ENCODE measurements at regions of chr18 and their contacts with region 1.

Region 1: DNA sequence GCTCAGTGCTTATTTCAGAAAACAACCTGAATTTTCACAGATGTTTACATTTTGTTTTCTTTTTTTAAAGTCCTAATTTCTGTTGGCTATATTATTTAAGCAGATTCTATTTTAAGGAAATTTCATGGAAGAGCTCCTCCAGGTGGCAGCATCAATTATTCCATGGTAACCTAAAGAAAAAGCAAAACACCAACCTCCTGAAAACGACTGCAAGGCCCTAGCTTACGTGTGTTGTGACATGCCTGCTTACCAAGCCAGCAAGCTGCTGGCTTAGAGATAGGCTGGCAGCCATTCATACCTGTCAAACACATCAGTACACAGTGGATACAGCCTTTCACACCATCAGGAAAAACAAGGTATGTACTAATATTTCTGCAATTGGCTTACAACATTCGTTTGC is 64.9 kb downstream of the LPIN2 start:
- DNase-seq: no peak
- H3K4me3 ChIP-seq: no peak overlapping the region
- H3K27ac ChIP-seq: no peak overlapping the region
- H3K4me1 ChIP-seq: no peaks in the 10 kb centered on the region
- H3K27me3 ChIP-seq: no peaks in the 10 kb centered on the region
- CTCF ChIP-seq: peak in 2 of 3 experiments; percentile 27 to 33; a peak in 2 of 4 replicates
- EP300 ChIP-seq: no peak
- POLR2A ChIP-seq: no peak
- RAD21 ChIP-seq: peak; percentile 29 to 33; a peak in 3 of 4 replicates

Region 2: DNA sequence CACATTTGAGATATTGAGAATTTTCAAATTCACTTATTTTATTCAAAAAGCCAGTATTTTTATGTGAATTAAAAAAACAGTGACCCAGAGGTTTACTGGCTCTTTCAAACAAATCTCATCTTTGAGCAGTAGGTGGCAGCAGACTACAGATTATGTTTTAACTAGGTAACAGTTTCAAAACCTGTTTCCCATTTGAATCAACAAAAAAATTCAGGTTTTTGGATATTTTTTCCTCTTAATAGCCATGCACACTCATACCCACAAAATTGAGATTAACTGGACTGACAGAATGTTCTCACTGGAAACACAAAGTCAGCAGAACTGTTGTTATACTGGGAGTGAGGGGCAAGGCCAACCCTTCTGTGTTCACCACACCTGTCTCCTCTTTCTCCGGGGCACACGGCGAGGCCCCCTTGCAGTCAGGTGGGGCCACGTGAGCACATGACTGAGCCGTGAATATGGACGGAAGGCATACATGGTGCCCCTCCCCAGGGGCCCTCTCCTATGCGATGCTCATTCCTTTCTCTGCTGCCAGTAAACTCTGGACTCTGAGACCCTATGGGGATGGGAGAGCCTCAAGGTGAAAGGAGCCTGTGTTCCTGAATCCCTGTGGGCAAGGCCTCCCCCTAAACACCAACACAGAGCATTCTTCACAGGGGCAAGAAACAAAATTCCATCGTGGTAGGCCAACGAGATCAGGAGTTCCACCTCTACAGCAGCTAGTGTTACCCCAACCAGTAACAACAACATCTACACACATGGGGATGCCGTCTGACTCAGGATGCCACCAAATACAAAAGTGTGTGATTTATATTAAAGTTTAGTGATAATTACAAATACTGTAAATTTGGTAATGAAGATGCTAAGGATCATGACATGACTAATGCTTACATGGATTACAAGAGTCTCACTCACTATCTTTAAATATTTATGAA is 15.5 kb before region 1 on chr18:
- CTCF ChIA-PET with region 1: interaction called, 12 read pairs
- POLR2A ChIA-PET with region 1: no interaction called
- DNase-seq: peak in 1 of 2 experiments; percentile 63
- H3K4me3 ChIP-seq: no peak overlapping the region
- H3K27ac ChIP-seq: no peak overlapping the region; the same call in 1 of the 2 replicates
- H3K4me1 ChIP-seq: peaks cover 2 to 6% (median 5%) of the 10 kb centered on the region in 4 experiments; a peak in 4 of 7 replicates
- H3K27me3 ChIP-seq: no peaks in the 10 kb centered on the region
- CTCF ChIP-seq: peak in 2 of 3 experiments; percentile 50 to 57; a peak in 2 of 4 replicates
- EP300 ChIP-seq: no peak
- POLR2A ChIP-seq: no peak
- RAD21 ChIP-seq: peak; percentile 76 to 80

Region 3: GRCh38 chr18:2985628-2986027 is 37.6 kb after region 1 on chr18:
- CTCF ChIA-PET with region 1: interaction called, 11 read pairs
- POLR2A ChIA-PET with region 1: no interaction called
- DNase-seq: no peak
- H3K4me3 ChIP-seq: no peak overlapping the region
- H3K27ac ChIP-seq: no peak overlapping the region
- H3K4me1 ChIP-seq: peaks cover 0 to 11% (median 9%) of the 10 kb centered on the region in 4 experiments; a peak in 6 of 7 replicates
- H3K27me3 ChIP-seq: no peaks in the 10 kb centered on the region
- CTCF ChIP-seq: peak in 1 of 3 experiments; percentile 44; a peak in 2 of 4 replicates
- EP300 ChIP-seq: no peak
- POLR2A ChIP-seq: no peak
- RAD21 ChIP-seq: peak; percentile 8 to 14; a peak in 1 of 4 replicates